ENCODE measurements at regions of chr13 and their contacts with region 1.

Region 1: GRCh38 chr13:101190337-101190736 is 226.0 kb downstream of the NALCN start:
- DNase-seq: no peak
- H3K4me3 ChIP-seq: no peak overlapping the region
- H3K27ac ChIP-seq: no peak overlapping the region
- H3K4me1 ChIP-seq: no peaks in the 10 kb centered on the region
- H3K27me3 ChIP-seq: no peaks in the 10 kb centered on the region
- CTCF ChIP-seq: no peak
- POLR2A ChIP-seq: no peak

Region 2: GRCh38 chr13:99590519-99591011 is 1599.8 kb before region 1 on chr13:
- intact Hi-C with region 1: loop called (anchors 5 kb)
- DNase-seq: no peak
- H3K4me3 ChIP-seq: no peak overlapping the region
- H3K27ac ChIP-seq: peak overlapping the region; percentile 27
- H3K4me1 ChIP-seq: peaks cover 14% of the 10 kb centered on the region
- H3K27me3 ChIP-seq: no peaks in the 10 kb centered on the region
- CTCF ChIP-seq: no peak
- POLR2A ChIP-seq: no peak

Region 3: GRCh38 chr13:101155920-101156319 is 34.4 kb before region 1 on chr13:
- intact Hi-C with region 1: no loop called
- DNase-seq: no peak
- H3K4me3 ChIP-seq: no peak overlapping the region
- H3K27ac ChIP-seq: no peak overlapping the region
- H3K4me1 ChIP-seq: no peaks in the 10 kb centered on the region
- H3K27me3 ChIP-seq: no peaks in the 10 kb centered on the region
- CTCF ChIP-seq: no peak
- POLR2A ChIP-seq: no peak

Measured in vagina (tissue), 2 donors.